H1 (cell line): ENCODE measurements at regions of chr1 and their contacts with region 1.

Region 1: GRCh38 chr1:156060937-156061636 is at the start of gene RAB25:
- DNase-seq: peak; percentile 66 to 84
- H3K4me3 ChIP-seq: peak within 1 kb of the TSS; percentile 39 to 65 (median 52)
- H3K27ac ChIP-seq: peak within 1 kb of the TSS; percentile 93
- H3K4me1 ChIP-seq: peaks cover 0 to 22% (median 11%) of the 10 kb centered on the region in 4 experiments; a peak in 6 of 7 replicates
- H3K27me3 ChIP-seq: no peaks in the 10 kb centered on the region
- CTCF ChIP-seq: no peak
- EP300 ChIP-seq: peak in 1 of 2 experiments; percentile 35; a peak in 1 of 3 replicates
- POLR2A ChIP-seq: peak; percentile 52 to 54; a peak in 2 of 3 replicates
- RAD21 ChIP-seq: no peak; a peak in 1 of 4 replicates
- total RNA-seq, gene RAB25: 34.8 and 38.5 TPM in 2 replicates

Region 2: GRCh38 chr1:155934097-155934935 is 126.8 kb before region 1 on chr1 and contains the start of gene KHDC4:
- CTCF ChIA-PET with region 1: interaction called, 15 read pairs
- POLR2A ChIA-PET with region 1: interaction called, 7 read pairs
- DNase-seq: peak; percentile 87 to 96
- H3K4me3 ChIP-seq: peak within 1 kb of the TSS; percentile 89 to 100 (median 94)
- H3K27ac ChIP-seq: peak within 1 kb of the TSS; percentile 88
- H3K4me1 ChIP-seq: peaks cover 0 to 2% (median 1%) of the 10 kb centered on the region in 4 experiments; a peak in 4 of 7 replicates
- H3K27me3 ChIP-seq: no peaks in the 10 kb centered on the region
- CTCF ChIP-seq: no peak
- EP300 ChIP-seq: no peak
- POLR2A ChIP-seq: peak; percentile 91 to 96
- RAD21 ChIP-seq: peak in 1 of 2 experiments; percentile 10; a peak in 2 of 4 replicates
- total RNA-seq, gene KHDC4: 53.4 and 56.6 TPM in 2 replicates

Region 3: GRCh38 chr1:155970531-155971167 is 90.4 kb before region 1 on chr1:
- CTCF ChIA-PET with region 1: interaction called, 35 read pairs
- POLR2A ChIA-PET with region 1: interaction called, 4 read pairs
- DNase-seq: no peak
- H3K4me3 ChIP-seq: no peak overlapping the region
- H3K27ac ChIP-seq: no peak overlapping the region
- H3K4me1 ChIP-seq: peaks cover 9 to 43% (median 30%) of the 10 kb centered on the region in 4 experiments
- H3K27me3 ChIP-seq: no peaks in the 10 kb centered on the region
- CTCF ChIP-seq: no peak
- EP300 ChIP-seq: no peak
- POLR2A ChIP-seq: no peak
- RAD21 ChIP-seq: no peak

Region 4: GRCh38 chr1:156014826-156015225 is 46.3 kb before region 1 on chr1:
- CTCF ChIA-PET with region 1: interaction called, 45 read pairs
- POLR2A ChIA-PET with region 1: interaction called, 9 read pairs
- DNase-seq: no peak
- H3K4me3 ChIP-seq: no peak overlapping the region
- H3K27ac ChIP-seq: no peak overlapping the region
- H3K4me1 ChIP-seq: peaks cover 0 to 1% (median under 1%) of the 10 kb centered on the region in 4 experiments; a peak in 2 of 7 replicates
- H3K27me3 ChIP-seq: no peaks in the 10 kb centered on the region
- CTCF ChIP-seq: peak; percentile 18 to 45 (median 27)
- EP300 ChIP-seq: no peak
- POLR2A ChIP-seq: no peak
- RAD21 ChIP-seq: peak; percentile 20 to 43

Region 5: GRCh38 chr1:156076501-156077429 is 15.7 kb after region 1 on chr1:
- CTCF ChIA-PET with region 1: interaction called, 33 read pairs
- POLR2A ChIA-PET with region 1: interaction called, 88 read pairs
- DNase-seq: peak in 1 of 2 experiments; percentile 84
- H3K4me3 ChIP-seq: peak overlapping the region in 3 of 4 experiments; percentile 2 to 44 (median 4); a peak in 5 of 8 replicates
- H3K27ac ChIP-seq: peak overlapping the region; percentile 53; the same call in 1 of the 2 replicates
- H3K4me1 ChIP-seq: peaks cover 24 to 57% (median 48%) of the 10 kb centered on the region in 4 experiments
- H3K27me3 ChIP-seq: no peaks in the 10 kb centered on the region
- CTCF ChIP-seq: no peak
- EP300 ChIP-seq: no peak
- POLR2A ChIP-seq: no peak
- RAD21 ChIP-seq: no peak

Region 6: DNA sequence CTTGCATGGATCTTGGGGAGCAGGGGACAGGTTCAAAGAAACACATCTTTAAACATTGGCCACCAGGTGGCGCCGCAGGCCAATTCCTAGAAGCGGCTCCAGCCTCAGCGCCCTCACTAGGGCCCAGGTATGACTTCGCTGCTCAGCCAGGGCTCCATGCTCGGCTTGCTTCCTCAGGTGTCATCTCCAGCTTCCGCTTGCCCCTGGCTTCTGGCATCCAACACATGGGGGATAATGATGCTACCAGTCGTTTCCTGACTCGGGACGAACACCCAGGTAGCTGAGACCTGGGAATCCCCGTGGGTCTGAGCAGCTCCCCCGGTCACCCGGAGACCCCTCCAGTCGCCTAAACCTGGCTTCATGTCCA is 29.7 kb after region 1 on chr1:
- CTCF ChIA-PET with region 1: interaction called, 11 read pairs
- POLR2A ChIA-PET with region 1: no interaction called
- DNase-seq: peak in 1 of 2 experiments; percentile 95
- H3K4me3 ChIP-seq: no peak overlapping the region
- H3K27ac ChIP-seq: no peak overlapping the region
- H3K4me1 ChIP-seq: peaks cover 2 to 7% (median 5%) of the 10 kb centered on the region in 4 experiments
- H3K27me3 ChIP-seq: no peaks in the 10 kb centered on the region
- CTCF ChIP-seq: peak; percentile 66 to 97 (median 90)
- EP300 ChIP-seq: no peak
- POLR2A ChIP-seq: no peak
- RAD21 ChIP-seq: peak; percentile 90 to 93

Region 7: DNA sequence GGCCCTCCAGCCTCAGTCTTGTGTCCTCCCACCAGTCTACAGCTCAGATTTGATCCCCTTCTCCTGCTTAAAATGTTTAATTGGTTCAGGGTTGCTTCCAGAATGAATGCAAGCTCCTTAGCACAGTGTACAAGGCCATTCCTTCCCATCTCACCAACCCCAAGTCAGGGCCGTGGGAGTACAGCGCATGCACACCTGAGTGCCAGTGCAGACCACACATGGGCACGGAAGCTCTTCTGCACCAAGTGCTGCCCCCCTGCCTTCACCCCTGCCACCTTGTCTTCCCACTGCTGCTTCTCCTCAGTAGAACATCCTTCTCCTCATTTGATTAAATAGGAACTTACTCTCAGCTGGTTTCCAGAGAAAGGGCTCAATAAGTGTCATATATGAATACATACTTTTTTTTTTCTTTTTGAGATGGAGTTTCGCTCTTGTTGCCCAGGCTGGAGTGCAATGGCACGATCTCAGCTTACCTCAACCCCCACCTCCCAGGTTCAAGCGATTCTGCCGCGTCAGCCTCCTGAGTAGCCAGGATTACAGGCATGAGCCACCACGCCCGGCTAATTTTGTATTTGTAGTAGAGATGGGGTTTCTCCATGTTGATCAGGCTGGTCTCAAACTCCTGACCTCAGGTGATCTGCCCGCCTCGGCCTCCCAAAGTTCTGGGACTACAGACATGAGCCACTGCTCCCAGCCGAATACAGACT is 161.1 kb after region 1 on chr1:
- CTCF ChIA-PET with region 1: no interaction called
- POLR2A ChIA-PET with region 1: no interaction called
- DNase-seq: no peak
- H3K4me3 ChIP-seq: no peak overlapping the region
- H3K27ac ChIP-seq: no peak overlapping the region
- H3K4me1 ChIP-seq: no peaks in the 10 kb centered on the region
- H3K27me3 ChIP-seq: no peaks in the 10 kb centered on the region
- CTCF ChIP-seq: no peak
- EP300 ChIP-seq: no peak
- POLR2A ChIP-seq: no peak
- RAD21 ChIP-seq: no peak